Left lung (tissue), 14 donors: ENCODE measurements at regions of chr2 and their contacts with region 1.

Region 1: GRCh38 chr2:231612179-231613053 is 19.8 kb downstream of the TEX44 start:
- DNase-seq: peak; percentile 78 to 97 (median 92)
- ATAC-seq: peak; percentile 79
- H3K4me3 ChIP-seq: no peak overlapping the region
- H3K27ac ChIP-seq: peak overlapping the region; percentile 92 to 94
- H3K4me1 ChIP-seq: peaks cover 26 to 49% of the 10 kb centered on the region in 2 donors
- H3K27me3 ChIP-seq: peaks cover 0 to 22% of the 10 kb centered on the region in 2 donors
- CTCF ChIP-seq: peak; percentile 91 to 98

Region 2: DNA sequence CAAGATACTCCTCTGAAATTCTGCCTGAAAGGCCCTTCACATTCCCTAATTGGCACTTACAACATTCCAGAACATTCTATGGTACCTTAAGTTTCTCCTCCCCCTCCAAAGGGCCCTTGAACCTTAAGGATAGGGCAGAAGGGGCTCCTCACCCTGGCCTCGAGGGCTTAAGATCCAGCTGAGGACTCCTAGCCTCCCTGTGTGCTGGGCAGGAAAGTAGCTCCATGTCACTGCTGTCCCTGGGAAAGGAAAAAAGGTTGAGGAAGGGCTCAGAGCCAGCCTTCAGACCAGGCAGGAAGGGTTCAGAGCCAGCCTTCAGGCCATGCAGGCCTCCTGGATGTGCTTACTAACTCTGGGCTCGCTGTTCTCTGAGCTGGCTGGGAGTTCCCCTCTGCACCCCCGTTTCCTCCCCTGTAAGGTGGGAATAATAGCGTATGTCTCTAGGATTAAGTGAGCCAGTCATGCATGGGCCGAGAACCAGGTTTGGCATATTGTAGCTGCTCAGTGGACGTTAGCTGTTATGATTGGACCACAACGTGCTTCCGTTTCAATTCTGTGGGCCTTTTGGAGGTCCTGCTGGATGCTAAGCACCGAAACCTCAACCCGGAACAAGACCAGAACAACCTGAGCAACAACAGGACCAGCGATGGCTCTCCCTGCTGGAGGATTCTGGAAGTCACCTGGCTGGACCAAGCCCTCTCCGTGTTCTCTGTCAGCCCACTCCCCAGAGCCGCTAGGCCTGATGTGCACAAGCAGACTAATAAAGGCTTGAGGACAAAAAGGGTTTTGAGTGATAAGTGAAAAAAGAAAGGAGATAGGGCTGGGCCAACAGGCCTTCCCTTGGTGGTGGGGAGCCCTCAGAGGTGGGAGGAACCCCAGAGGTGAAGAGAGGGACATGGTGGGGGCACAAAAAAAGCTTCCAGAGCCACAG is 217.9 kb before region 1 on chr2:
- intact Hi-C with region 1: no loop called
- DNase-seq: peak in 1 of 4 donors; percentile 35
- ATAC-seq: peak; percentile 68
- H3K4me3 ChIP-seq: peak overlapping the region in 1 of 2 donors; percentile 56
- H3K27ac ChIP-seq: peak overlapping the region; percentile 60 to 80
- H3K4me1 ChIP-seq: peaks cover 6 to 45% of the 10 kb centered on the region in 2 donors
- H3K27me3 ChIP-seq: peaks cover 4 to 33% of the 10 kb centered on the region in 2 donors
- CTCF ChIP-seq: no peak

Region 3: DNA sequence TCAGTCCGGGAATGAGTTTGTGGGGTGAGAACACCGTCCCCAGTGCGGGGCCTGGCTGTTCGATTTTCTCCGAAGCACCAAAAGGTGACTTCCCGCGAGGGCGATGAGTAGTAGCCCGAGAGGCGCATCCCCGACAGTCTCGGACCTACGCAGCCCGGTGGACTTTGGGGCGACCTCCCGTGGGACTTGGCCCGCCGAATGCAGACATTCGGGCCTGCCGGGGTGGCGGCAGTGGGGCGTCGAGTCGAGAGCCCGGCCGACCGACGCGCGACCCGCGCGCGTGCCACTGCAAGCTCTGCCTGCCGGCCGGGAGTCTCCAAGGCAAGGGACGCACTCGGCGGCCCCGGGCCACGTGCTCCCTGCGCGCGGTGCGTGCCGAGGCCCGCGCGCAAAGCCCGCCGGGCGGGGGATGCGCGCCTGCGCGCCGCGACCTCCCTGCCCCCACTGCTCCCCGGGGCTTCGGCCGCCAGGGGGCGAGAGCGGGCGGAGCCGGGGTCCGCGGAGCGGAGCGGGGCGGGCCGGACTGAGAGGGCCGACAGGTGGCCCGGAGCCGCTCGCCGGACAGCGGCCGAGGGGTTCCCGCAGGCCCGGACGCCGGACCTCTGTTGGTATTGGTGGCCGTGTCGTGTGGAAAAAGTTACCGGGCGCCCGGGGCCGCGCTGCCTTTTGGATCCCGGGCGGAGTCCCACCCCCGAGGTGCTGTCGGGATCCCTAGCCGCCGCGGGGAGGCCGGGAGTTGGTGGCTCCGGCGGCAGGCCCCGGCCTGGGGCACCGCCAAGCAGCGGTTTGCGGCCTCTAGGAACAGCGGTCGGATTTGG is 97.8 kb after region 1 on chr2:
- intact Hi-C with region 1: loop called in 1 of 2 experiments (anchors 2 kb)
- DNase-seq: peak; percentile 83 to 97 (median 89)
- ATAC-seq: peak; percentile 37
- H3K4me3 ChIP-seq: peak overlapping the region; percentile 82 to 95
- H3K27ac ChIP-seq: peak overlapping the region; percentile 98 to 100
- H3K4me1 ChIP-seq: peaks cover 18 to 40% of the 10 kb centered on the region in 2 donors
- H3K27me3 ChIP-seq: no peaks in the 10 kb centered on the region
- CTCF ChIP-seq: peak; percentile 67 to 85